ENCODE measurements at regions of chr13 and their contacts with region 1.

Region 1: GRCh38 chr13:95660981-95661581 is 15.9 kb upstream of the DNAJC3 start:
- DNase-seq: peak; percentile 88
- H3K4me3 Mint-ChIP-seq: no peak overlapping the region
- H3K27ac Mint-ChIP-seq: no peak overlapping the region
- H3K4me1 Mint-ChIP-seq: no peaks in the 10 kb centered on the region
- H3K27me3 Mint-ChIP-seq: no peaks in the 10 kb centered on the region
- CTCF ChIP-seq: peak; percentile 59

Region 2: GRCh38 chr13:95644601-95645052 is 16.5 kb before region 1 on chr13 and contains the start of gene DZIP1:
- CTCF ChIA-PET with region 1: interaction called, 18 read pairs
- POLR2A ChIA-PET with region 1: interaction called, 3 read pairs
- intact Hi-C with region 1: no loop called
- DNase-seq: peak; percentile 80
- H3K4me3 Mint-ChIP-seq: peak within 1 kb of the TSS; percentile 82
- H3K27ac Mint-ChIP-seq: no peak within 1 kb of the TSS
- H3K4me1 Mint-ChIP-seq: peaks cover 5% of the 10 kb centered on the region
- H3K27me3 Mint-ChIP-seq: no peaks in the 10 kb centered on the region
- CTCF ChIP-seq: no peak
- total RNA-seq, gene DZIP1: 16.4 and 22.1 TPM in 2 replicates

Region 3: GRCh38 chr13:95650696-95651095 is 10.4 kb before region 1 on chr13:
- CTCF ChIA-PET with region 1: interaction called, 18 read pairs
- POLR2A ChIA-PET with region 1: no interaction called
- intact Hi-C with region 1: no loop called
- DNase-seq: no peak
- H3K4me3 Mint-ChIP-seq: no peak overlapping the region
- H3K27ac Mint-ChIP-seq: no peak overlapping the region
- H3K4me1 Mint-ChIP-seq: no peaks in the 10 kb centered on the region
- H3K27me3 Mint-ChIP-seq: no peaks in the 10 kb centered on the region
- CTCF ChIP-seq: no peak

Region 4: GRCh38 chr13:95671597-95671996 is 10.5 kb after region 1 on chr13:
- CTCF ChIA-PET with region 1: interaction called, 19 read pairs
- POLR2A ChIA-PET with region 1: interaction called, 9 read pairs
- intact Hi-C with region 1: no loop called
- DNase-seq: no peak
- H3K4me3 Mint-ChIP-seq: no peak overlapping the region
- H3K27ac Mint-ChIP-seq: no peak overlapping the region
- H3K4me1 Mint-ChIP-seq: peaks cover 23% of the 10 kb centered on the region
- H3K27me3 Mint-ChIP-seq: no peaks in the 10 kb centered on the region
- CTCF ChIP-seq: no peak